PC-9 (cell line): ENCODE measurements at regions of chr21 and their contacts with region 1.

Region 1: GRCh38 chr21:43372663-43373361 is 54.1 kb downstream of the SIK1 start:
- DNase-seq: peak; percentile 82 to 85
- H3K4me3 ChIP-seq: no peak overlapping the region
- H3K27ac ChIP-seq: peak overlapping the region; percentile 60
- H3K4me1 ChIP-seq: peaks cover 31% of the 10 kb centered on the region
- H3K27me3 ChIP-seq: no peaks in the 10 kb centered on the region
- CTCF ChIP-seq: no peak

Region 2: GRCh38 chr21:43277481-43278351 is 95.1 kb before region 1 on chr21:
- CTCF ChIA-PET with region 1: no interaction called
- POLR2A ChIA-PET with region 1: no interaction called
- intact Hi-C with region 1: no loop called
- DNase-seq: no peak
- H3K4me3 ChIP-seq: no peak overlapping the region
- H3K27ac ChIP-seq: no peak overlapping the region
- H3K4me1 ChIP-seq: no peaks in the 10 kb centered on the region
- H3K27me3 ChIP-seq: no peaks in the 10 kb centered on the region
- CTCF ChIP-seq: no peak

Region 3: GRCh38 chr21:43295066-43295958 is 77.5 kb before region 1 on chr21:
- CTCF ChIA-PET with region 1: no interaction called
- POLR2A ChIA-PET with region 1: no interaction called
- intact Hi-C with region 1: no loop called
- DNase-seq: no peak
- H3K4me3 ChIP-seq: no peak overlapping the region
- H3K27ac ChIP-seq: no peak overlapping the region
- H3K4me1 ChIP-seq: no peaks in the 10 kb centered on the region
- H3K27me3 ChIP-seq: no peaks in the 10 kb centered on the region
- CTCF ChIP-seq: no peak

Region 4: GRCh38 chr21:43324596-43324995 is 48.2 kb before region 1 on chr21:
- CTCF ChIA-PET with region 1: no interaction called
- POLR2A ChIA-PET with region 1: interaction called, 12 read pairs
- intact Hi-C with region 1: no loop called
- DNase-seq: no peak
- H3K4me3 ChIP-seq: no peak overlapping the region
- H3K27ac ChIP-seq: no peak overlapping the region
- H3K4me1 ChIP-seq: 0 out of 2 replicates have a peak, but pooled peaks cover 4% of the 10 kb centered on the region
- H3K27me3 ChIP-seq: no peaks in the 10 kb centered on the region
- CTCF ChIP-seq: no peak

Region 5: GRCh38 chr21:43340491-43341377 is 32.1 kb before region 1 on chr21:
- CTCF ChIA-PET with region 1: no interaction called
- POLR2A ChIA-PET with region 1: interaction called, 15 read pairs
- intact Hi-C with region 1: no loop called
- DNase-seq: peak; percentile 64 to 76
- H3K4me3 ChIP-seq: no peak overlapping the region
- H3K27ac ChIP-seq: no peak overlapping the region
- H3K4me1 ChIP-seq: peaks cover 33% of the 10 kb centered on the region
- H3K27me3 ChIP-seq: no peaks in the 10 kb centered on the region
- CTCF ChIP-seq: no peak

Region 6: DNA sequence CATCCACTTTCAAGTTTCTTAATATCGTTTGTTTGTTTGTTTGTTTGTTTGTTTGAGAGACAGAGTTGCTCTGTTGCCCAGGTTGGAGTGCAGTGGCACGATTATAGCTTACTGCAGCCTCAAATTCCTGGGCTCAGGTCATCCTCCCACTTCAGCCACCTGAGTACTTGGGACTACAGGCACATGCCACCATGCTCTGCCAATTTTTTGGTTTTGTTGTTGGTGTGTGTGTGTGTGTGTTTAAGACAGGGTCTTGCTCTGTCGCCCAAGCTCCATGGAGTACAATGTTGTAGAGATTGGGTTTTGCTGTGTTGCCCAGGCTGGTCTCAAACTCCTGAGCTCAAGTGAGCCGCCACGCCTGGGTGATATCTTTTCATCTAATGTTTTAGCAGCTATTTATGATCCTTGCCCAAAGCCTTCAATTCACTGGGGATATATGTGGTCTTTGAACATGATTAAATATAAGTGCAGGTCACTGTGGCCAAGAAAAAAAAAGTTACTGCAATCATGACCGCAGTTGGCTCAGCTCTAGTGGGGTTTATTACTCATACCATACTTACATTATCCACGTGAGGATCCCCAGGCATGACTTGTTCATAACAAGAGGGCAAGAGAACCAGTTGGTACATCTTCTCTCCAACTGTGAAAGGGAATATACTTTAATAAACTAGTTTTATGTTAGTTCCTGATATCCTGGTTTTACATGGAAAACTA is 294.5 kb after region 1 on chr21:
- CTCF ChIA-PET with region 1: no interaction called
- POLR2A ChIA-PET with region 1: no interaction called
- intact Hi-C with region 1: no loop called
- DNase-seq: no peak
- H3K4me3 ChIP-seq: no peak overlapping the region
- H3K27ac ChIP-seq: no peak overlapping the region
- H3K4me1 ChIP-seq: no peaks in the 10 kb centered on the region
- H3K27me3 ChIP-seq: no peaks in the 10 kb centered on the region
- CTCF ChIP-seq: no peak

Region 7: DNA sequence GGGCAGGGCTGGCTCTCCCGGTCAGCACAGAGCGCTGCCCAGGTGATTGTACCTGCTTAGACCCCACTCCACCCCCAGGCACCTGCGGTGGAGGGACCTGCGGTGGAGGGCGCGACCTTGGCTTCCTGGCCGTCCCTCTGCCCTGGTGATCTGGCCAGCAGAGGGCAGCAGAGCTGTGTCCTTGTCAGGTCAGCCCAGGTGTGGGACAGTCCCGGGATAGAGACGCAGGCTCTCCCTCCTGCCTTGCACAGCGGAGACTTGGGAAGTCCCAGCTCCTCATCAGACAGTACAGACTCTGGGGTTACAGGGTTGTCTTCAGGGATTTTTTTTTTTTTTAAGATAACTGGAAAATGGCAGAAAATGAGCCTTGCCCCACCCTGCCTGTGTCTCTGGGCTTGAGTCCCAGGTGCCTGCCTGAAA is 1577.0 kb after region 1 on chr21:
- CTCF ChIA-PET with region 1: no interaction called
- POLR2A ChIA-PET with region 1: no interaction called
- intact Hi-C with region 1: no loop called
- DNase-seq: peak in 1 of 2 experiments; percentile 74
- H3K4me3 ChIP-seq: no peak overlapping the region
- H3K27ac ChIP-seq: no peak overlapping the region
- H3K4me1 ChIP-seq: no peaks in the 10 kb centered on the region
- H3K27me3 ChIP-seq: no peaks in the 10 kb centered on the region
- CTCF ChIP-seq: peak; percentile 86